ENCODE measurements at regions of chr11 and their contacts with region 1.

Region 1: GRCh38 chr11:44621140-44621681 is 55.7 kb downstream of the CD82 start:
- DNase-seq: peak; percentile 62
- H3K4me3 ChIP-seq: no peak overlapping the region
- H3K27ac ChIP-seq: no peak overlapping the region
- H3K4me1 ChIP-seq: peaks cover 5% of the 10 kb centered on the region
- CTCF ChIP-seq: peak; percentile 91

Region 2: DNA sequence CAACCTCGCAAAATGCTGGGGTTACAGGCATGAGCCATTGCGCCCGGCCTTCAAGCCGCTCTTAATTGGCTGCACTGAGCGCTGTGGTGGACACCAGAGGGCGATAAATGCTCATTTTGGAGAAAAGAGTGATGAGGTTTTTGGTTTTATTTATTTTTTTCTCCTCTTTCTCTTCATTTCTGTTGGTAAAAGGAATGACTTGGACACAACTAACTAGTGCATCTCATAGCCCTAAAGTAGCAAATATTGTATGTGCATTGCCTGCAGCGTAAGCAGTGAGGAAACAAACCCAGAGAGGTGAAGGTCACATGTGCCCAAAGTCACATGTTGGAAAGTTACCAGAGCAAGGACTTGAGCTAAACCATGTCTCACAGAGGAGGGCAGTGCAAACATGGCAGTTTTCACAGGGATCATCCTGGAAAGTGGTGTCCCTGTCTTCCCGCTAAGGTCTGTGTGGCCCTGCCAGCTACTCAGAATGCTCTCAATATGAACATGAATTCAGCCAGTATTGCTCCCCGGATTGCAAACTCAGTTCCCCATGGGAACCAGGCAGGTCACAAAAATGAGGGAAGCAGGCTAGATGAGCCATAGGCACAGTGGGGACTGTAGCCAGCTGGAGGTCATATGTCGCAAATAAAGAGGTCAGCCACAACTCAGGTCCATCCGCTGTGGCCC is 64.3 kb before region 1 on chr11:
- CTCF ChIA-PET with region 1: interaction called, 8 read pairs
- POLR2A ChIA-PET with region 1: interaction called, 9 read pairs
- intact Hi-C with region 1: loop called (anchors 1 kb)
- DNase-seq: peak; percentile 80
- H3K4me3 ChIP-seq: no peak overlapping the region
- H3K27ac ChIP-seq: peak overlapping the region; percentile 44
- H3K4me1 ChIP-seq: peaks cover 37% of the 10 kb centered on the region
- CTCF ChIP-seq: peak; percentile 85

Region 3: DNA sequence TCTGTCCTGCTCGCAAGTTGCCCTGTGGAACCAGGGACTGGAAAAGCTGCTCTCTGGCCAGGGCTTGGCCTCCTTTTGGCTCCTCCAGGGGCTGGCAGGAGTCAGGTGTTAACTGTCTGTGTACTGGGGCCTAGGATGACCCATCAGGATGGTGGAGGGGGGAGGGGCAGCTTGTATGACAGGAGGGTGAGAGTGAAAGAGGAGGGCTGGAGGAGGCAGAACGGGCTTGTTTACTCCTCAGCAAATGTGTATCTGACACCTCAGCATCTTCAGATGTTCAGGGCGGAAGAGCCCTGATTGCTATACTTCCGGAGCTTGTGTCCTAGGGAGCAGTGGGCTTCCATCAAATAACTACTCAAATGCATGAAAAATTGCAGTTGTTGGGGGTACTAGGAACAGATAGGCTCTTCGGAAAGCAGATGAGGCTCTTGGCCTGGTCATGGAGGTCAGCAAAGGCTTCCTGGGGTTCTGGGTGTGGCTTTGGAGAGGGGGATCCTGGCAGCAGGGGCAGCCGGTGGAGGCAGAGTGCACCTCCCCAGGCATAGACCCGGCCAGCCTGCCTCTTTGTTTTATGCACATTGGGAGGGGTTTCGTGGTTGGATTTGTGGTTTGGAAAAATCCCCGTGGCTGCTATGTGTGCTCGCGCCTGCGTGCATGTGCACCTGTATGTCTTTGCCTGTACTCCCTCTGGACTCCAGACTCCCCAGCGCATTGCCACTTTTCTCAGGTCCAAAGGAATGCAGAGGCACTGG is 24.5 kb before region 1 on chr11:
- CTCF ChIA-PET with region 1: no interaction called
- POLR2A ChIA-PET with region 1: no interaction called
- intact Hi-C with region 1: no loop called
- DNase-seq: peak; percentile 61
- H3K4me3 ChIP-seq: peak overlapping the region; percentile 15
- H3K27ac ChIP-seq: peak overlapping the region; percentile 40
- H3K4me1 ChIP-seq: peaks cover 35% of the 10 kb centered on the region
- CTCF ChIP-seq: no peak

Region 4: DNA sequence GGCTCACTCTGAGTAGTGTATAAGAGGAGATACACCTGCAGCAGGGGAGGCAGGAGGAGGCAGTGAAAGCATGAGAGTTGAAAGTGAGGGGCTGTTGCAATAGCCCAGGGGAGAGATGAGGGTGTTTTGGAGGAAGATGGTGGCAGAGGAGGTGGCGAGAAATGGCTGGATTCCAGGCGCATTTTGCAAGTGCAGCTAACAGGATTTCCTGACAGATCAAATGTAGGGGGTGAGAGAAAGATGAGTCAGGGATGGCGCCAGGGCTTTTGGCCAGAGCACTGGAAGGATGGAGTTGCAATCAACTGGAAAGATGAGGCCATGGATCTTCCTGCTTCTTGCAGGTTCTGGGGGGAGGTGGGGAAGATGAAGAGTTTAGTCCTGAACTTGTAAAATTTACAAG is 88.8 kb after region 1 on chr11:
- CTCF ChIA-PET with region 1: no interaction called
- POLR2A ChIA-PET with region 1: no interaction called
- intact Hi-C with region 1: no loop called
- DNase-seq: no peak
- H3K4me3 ChIP-seq: no peak overlapping the region
- H3K27ac ChIP-seq: no peak overlapping the region
- H3K4me1 ChIP-seq: no peaks in the 10 kb centered on the region
- CTCF ChIP-seq: no peak

Region 5: GRCh38 chr11:44775366-44775984 is 154.3 kb after region 1 on chr11:
- CTCF ChIA-PET with region 1: no interaction called
- POLR2A ChIA-PET with region 1: no interaction called
- intact Hi-C with region 1: loop called (anchors 1 kb)
- DNase-seq: peak; percentile 51
- H3K4me3 ChIP-seq: no peak overlapping the region
- H3K27ac ChIP-seq: no peak overlapping the region
- H3K4me1 ChIP-seq: no peaks in the 10 kb centered on the region
- CTCF ChIP-seq: peak; percentile 87

Region 6: GRCh38 chr11:44809283-44809682 is 188.1 kb after region 1 on chr11:
- CTCF ChIA-PET with region 1: no interaction called
- POLR2A ChIA-PET with region 1: interaction called, 12 read pairs
- intact Hi-C with region 1: no loop called
- DNase-seq: no peak
- H3K4me3 ChIP-seq: no peak overlapping the region
- H3K27ac ChIP-seq: no peak overlapping the region
- H3K4me1 ChIP-seq: no peaks in the 10 kb centered on the region
- CTCF ChIP-seq: no peak

Region 7: GRCh38 chr11:44893846-44894617 is 272.8 kb after region 1 on chr11:
- CTCF ChIA-PET with region 1: no interaction called
- POLR2A ChIA-PET with region 1: no interaction called
- intact Hi-C with region 1: loop called (anchors 5 kb)
- DNase-seq: peak; percentile 57
- H3K4me3 ChIP-seq: no peak overlapping the region
- H3K27ac ChIP-seq: no peak overlapping the region
- H3K4me1 ChIP-seq: no peaks in the 10 kb centered on the region
- CTCF ChIP-seq: peak; percentile 82

Region 8: DNA sequence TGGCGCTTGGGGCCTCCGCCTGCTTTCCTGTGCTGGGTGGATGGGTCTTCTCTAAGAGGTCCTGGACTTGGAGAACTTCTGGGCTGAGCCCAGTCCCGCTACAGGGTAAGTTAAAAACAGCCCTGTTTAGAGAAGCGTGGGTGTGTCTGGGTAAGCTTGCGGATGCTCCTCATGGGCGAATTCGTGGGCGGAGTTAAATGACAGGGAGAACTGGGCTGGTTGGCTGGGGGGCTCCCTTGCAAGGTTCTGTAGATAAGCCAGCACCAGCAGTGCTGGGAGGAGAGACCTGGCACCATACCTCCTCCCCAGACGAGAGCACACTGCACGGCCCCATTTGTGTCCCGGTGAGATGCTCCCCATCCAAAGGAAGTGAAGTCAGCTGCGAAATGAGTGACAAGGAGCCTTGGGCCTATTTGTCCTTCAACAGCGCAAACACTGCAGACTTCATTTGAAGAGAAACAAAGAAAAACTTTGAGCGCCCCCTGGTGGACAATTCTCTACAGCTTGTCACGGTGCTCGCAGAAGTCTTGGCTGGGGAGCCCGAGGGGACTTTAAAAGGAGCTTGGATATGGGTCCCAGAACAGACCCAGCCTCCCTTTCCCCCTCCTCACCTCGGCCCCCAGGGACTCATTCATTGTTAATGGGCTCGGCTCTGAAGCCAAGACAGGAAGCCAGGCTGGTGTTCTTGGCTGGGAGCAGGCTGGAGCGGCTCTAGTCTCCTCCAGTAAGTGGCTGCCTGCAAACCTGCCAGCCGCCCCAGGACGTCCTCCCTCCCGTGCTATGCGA is 290.0 kb after region 1 on chr11:
- CTCF ChIA-PET with region 1: no interaction called
- POLR2A ChIA-PET with region 1: no interaction called
- intact Hi-C with region 1: loop called (anchors 1 kb)
- DNase-seq: peak; percentile 85
- H3K4me3 ChIP-seq: no peak overlapping the region
- H3K27ac ChIP-seq: no peak overlapping the region
- H3K4me1 ChIP-seq: peaks cover 6% of the 10 kb centered on the region
- CTCF ChIP-seq: peak; percentile 87